ENCODE measurements at regions of chr10 and their contacts with region 1.

Region 1: DNA sequence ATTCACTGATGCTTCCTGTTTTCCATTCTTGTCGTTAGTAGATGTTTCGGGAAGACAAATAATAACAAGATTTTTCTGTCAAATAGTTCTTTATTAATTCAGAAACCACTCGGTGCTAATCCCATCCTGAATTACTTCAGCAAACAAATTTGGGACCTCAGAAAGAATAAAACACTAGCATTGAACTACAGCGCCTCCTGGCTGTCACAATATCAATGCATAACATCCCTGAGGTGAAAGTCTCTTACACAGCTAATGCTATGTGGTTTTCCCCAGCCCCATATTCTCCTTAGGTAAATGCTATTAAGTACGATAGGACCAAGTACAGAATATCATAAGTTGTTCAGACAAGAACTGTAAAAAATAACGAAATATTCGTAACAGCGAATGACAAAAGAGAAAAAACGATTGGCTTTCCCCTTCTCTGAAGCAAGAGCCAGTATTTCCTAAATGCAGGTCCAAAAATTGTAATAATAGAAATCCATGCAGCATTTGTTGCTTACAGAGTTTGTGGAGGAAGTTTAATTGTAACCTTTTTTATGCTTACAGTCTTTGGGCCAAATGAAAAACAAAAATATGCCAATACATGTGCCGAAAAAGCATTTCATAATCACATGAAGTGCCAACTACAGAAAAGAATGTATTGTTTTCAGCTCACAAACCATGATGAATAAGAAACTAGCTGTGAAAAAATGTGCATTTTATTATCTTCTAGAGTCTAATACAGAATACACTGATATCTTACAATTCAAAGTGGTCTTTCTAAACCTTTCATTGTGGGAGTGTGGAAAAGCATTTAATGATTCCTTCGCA is 47.3 kb downstream of the MYPN start:
- DNase-seq: no peak
- H3K4me3 ChIP-seq: no peak overlapping the region
- CTCF ChIP-seq: peak; percentile 60

Region 2: DNA sequence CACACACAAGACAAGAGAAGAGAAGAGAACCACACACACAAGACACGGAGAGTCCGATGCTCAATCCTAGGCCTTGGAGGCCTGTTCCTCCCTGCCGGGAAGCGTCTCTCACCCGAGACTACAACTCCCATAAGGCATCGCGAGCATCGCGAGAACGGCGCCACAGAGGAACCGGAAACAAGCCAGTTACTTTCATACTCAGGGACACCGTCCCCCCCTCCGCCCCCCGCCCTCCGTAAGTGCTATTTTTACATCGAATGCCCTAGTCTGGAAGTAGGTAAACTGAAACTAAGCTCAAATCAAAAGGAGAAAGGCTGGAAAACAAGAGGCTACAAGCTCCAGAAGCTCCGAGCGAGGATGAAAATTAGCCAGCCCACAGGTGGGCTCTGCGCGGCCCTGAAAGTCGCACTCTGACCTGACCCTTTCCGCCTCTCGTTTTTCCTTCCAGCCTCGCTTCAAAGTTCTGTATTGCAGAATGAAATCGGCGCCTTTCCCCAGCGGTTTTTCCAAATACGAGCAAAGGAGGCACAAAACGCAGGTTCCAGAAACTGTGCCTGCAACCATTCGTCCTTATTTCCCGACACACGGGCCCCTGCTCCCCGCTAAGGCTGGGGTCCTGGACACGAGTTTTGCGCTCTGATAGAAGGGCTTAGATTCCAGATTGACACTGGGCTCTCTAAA is 307.1 kb before region 1 on chr10:
- CTCF ChIA-PET with region 1: interaction called, 35 read pairs
- POLR2A ChIA-PET with region 1: no interaction called
- DNase-seq: peak; percentile 69
- H3K4me3 ChIP-seq: peak overlapping the region; percentile 76
- CTCF ChIP-seq: no peak

Region 3: DNA sequence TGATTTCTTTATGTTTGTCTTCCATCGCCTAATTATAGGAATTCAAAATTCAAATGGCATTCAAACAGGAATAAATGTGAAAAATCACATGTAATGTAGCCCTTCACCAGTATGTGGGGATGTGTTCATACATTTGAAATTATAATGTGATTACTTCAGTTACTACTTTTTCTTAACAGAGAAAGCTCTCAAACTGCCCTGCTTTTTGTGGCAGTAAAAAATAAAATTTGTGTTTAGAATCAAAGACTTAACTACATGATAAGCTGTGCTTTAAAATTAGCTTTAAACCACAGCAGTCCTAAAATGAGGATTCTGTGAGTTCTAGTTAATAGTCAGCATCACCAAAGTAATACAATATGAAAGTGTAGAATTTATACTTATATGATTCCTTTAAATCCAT is 73.7 kb before region 1 on chr10:
- CTCF ChIA-PET with region 1: interaction called, 347 read pairs
- POLR2A ChIA-PET with region 1: interaction called, 4 read pairs
- DNase-seq: no peak
- H3K4me3 ChIP-seq: no peak overlapping the region
- CTCF ChIP-seq: peak; percentile 53

Region 4: DNA sequence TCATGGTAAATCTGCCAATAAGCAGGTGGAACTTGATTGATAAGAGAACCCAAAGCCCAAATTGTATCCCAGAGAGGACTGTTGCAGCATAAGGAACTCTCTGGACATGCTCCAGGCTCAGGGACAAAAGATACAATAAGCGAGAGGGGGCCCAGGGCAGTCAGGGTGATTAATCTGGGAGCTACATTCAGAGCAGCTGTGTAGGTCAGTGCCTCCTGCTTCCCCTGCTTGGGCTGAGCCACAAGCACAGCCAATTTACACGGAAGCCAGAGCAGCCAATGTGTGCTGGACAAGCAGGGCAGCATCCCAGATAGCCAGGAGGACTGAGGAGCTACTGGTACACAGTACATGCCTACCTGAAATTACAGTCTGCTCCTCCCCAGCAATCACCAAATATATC is 23.1 kb before region 1 on chr10:
- CTCF ChIA-PET with region 1: interaction called, 17 read pairs
- POLR2A ChIA-PET with region 1: interaction called, 3 read pairs
- DNase-seq: no peak
- H3K4me3 ChIP-seq: no peak overlapping the region
- CTCF ChIP-seq: no peak

Region 5: GRCh38 chr10:68144709-68145108 is 11.9 kb before region 1 on chr10:
- CTCF ChIA-PET with region 1: interaction called, 17 read pairs
- POLR2A ChIA-PET with region 1: no interaction called
- DNase-seq: no peak
- H3K4me3 ChIP-seq: no peak overlapping the region
- CTCF ChIP-seq: no peak

Region 6: DNA sequence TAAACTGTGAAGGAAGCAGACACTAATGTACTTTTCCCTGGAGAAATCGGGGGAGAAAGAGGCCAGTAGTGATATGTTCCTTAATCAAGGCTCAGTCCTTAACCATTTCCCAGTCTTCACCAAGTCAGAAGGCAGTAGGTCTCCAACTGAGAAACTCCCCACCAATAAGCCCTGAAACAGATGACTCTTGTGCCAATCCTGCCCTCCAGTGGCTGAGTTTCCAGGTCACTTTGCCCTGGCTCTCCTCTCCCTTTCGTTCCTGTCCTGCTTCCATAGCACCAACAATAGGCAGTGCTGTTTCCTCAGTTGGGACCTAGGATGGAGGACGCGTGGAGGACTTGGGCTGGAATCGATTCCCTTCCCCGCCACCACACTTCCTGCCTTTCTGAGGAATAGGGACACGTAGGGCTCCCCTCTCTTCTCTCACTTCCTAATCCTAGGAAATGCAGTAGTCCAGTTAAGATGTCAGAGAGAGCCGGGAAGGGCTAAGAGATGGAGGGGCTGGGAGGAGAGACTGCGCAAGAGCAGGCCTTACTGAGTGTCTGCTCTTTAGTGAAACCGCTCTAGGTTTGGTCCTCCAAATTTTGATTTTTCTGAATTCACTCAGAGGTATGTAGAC is 52.0 kb after region 1 on chr10:
- CTCF ChIA-PET with region 1: interaction called, 16 read pairs
- POLR2A ChIA-PET with region 1: no interaction called
- DNase-seq: no peak
- H3K4me3 ChIP-seq: no peak overlapping the region
- CTCF ChIP-seq: peak; percentile 74